Panc1 (cell line): ENCODE measurements at regions of chr16 and their contacts with region 1.

Region 1: GRCh38 chr16:28317040-28317880 is 24.9 kb downstream of the SBK1 start:
- DNase-seq: no peak
- ATAC-seq: peak; percentile 74
- H3K4me3 ChIP-seq: no peak overlapping the region
- H3K27ac ChIP-seq: no peak overlapping the region
- H3K4me1 ChIP-seq: no peaks in the 10 kb centered on the region
- H3K27me3 ChIP-seq: no peaks in the 10 kb centered on the region
- CTCF ChIP-seq: peak; percentile 96

Region 2: GRCh38 chr16:28277537-28278388 is 39.5 kb before region 1 on chr16:
- CTCF ChIA-PET with region 1: interaction called, 10 read pairs
- POLR2A ChIA-PET with region 1: interaction called, 3 read pairs
- in situ Hi-C with region 1: no loop called
- intact Hi-C with region 1: loop called (anchors 1 kb)
- DNase-seq: peak; percentile 58
- ATAC-seq: peak; percentile 93
- H3K4me3 ChIP-seq: peak overlapping the region; percentile 38 to 62
- H3K27ac ChIP-seq: 0 out of 2 replicates have a peak overlapping the region, but pooled peaks have one; percentile 34
- H3K4me1 ChIP-seq: 0 out of 2 replicates have a peak, but pooled peaks cover 3% of the 10 kb centered on the region
- H3K27me3 ChIP-seq: no peaks in the 10 kb centered on the region; the same call in 1 of the 2 replicates
- CTCF ChIP-seq: peak; percentile 92

Region 3: DNA sequence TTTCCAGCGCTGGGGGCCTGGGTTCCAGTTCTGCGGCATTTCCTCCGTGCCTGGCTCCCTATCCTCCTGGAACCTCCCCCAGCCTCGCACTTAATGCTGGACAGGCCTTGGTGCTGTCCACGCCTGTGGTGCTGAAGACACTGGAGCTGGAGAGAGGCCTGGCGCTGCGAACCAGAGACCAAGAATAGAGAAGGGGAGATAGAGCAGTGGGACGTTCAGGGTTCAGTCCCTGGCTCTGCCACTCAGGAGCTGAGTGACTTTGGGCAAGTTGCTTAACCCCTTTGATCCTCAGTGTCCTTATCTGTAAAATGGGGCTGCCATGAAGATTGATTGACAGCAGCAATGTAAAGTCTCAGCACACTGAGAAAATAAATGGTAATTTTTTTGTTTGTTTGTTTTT is 13.0 kb before region 1 on chr16:
- CTCF ChIA-PET with region 1: interaction called, 11 read pairs
- POLR2A ChIA-PET with region 1: interaction called, 4 read pairs
- in situ Hi-C with region 1: no loop called
- intact Hi-C with region 1: no loop called
- DNase-seq: no peak
- ATAC-seq: no peak
- H3K4me3 ChIP-seq: no peak overlapping the region
- H3K27ac ChIP-seq: no peak overlapping the region
- H3K4me1 ChIP-seq: no peaks in the 10 kb centered on the region
- H3K27me3 ChIP-seq: no peaks in the 10 kb centered on the region
- CTCF ChIP-seq: no peak